SK-N-SH (cell line): ENCODE measurements at regions of chr2 and their contacts with region 1.

Region 1: GRCh38 chr2:234288974-234289455 is 207.9 kb downstream of the ARL4C start:
- DNase-seq: peak; percentile 67
- H3K4me3 ChIP-seq: no peak overlapping the region; a peak in 1 of 4 replicates
- H3K27ac ChIP-seq: no peak overlapping the region
- H3K4me1 ChIP-seq: peaks cover 13 to 21% of the 10 kb centered on the region in 2 experiments; a peak in 2 of 4 replicates
- H3K27me3 ChIP-seq: no peaks in the 10 kb centered on the region
- CTCF ChIP-seq: peak; percentile 65
- EP300 ChIP-seq: no peak
- RAD21 ChIP-seq: peak; percentile 85

Region 2: DNA sequence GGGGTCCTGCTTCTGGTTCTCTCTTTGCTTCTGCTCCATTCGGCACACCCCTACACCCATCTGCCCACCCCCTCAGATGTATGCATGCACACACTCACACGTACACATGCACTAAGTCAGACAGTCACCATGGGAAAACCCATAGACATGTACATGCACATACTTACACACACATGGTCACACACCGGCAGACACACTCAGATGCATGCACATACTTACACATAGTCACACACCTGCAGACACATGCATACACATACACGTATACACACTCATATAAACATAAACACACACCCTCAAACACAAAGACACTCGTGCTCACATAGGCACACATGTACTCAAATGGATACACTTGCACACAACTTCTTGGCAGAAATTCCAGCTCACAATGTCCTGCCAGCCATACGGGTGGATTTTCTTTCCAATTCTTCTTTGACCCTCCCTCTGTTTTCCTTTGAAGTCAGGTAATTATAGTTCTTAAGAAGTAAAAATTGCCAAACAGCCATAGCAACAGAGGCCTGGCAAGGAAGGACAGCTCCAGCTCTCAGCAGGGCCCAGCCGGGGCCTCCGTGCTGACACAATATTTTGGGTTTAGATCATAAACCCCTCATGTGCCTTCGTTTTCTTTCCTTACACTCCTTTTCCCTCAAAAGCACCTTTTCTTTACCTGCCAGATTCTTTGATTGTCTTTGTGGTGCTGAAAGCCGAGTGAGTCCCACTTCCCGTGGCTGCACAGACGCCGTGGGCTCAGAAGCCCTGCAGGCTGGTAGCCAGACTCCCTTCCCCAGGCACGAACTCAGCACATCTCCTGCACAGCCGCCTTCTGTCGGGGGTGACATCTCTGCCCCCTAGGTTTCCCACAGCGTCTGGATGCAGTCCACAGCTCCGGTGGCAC is 12.2 kb after region 1 on chr2:
- CTCF ChIA-PET with region 1: interaction called, 15 read pairs
- POLR2A ChIA-PET with region 1: interaction called, 3 read pairs
- DNase-seq: no peak
- H3K4me3 ChIP-seq: no peak overlapping the region
- H3K27ac ChIP-seq: no peak overlapping the region
- H3K4me1 ChIP-seq: peaks cover 0 to 2% of the 10 kb centered on the region in 2 experiments; a peak in 1 of 4 replicates
- H3K27me3 ChIP-seq: no peaks in the 10 kb centered on the region
- CTCF ChIP-seq: no peak
- EP300 ChIP-seq: no peak
- RAD21 ChIP-seq: no peak

Region 3: GRCh38 chr2:234406085-234406484 is 117.1 kb after region 1 on chr2:
- CTCF ChIA-PET with region 1: interaction called, 13 read pairs
- POLR2A ChIA-PET with region 1: no interaction called
- DNase-seq: no peak
- H3K4me3 ChIP-seq: no peak overlapping the region
- H3K27ac ChIP-seq: no peak overlapping the region
- H3K4me1 ChIP-seq: no peaks in the 10 kb centered on the region
- H3K27me3 ChIP-seq: no peaks in the 10 kb centered on the region
- CTCF ChIP-seq: no peak; the same call in 1 of the 2 replicates
- EP300 ChIP-seq: no peak
- RAD21 ChIP-seq: peak; percentile 73

Region 4: DNA sequence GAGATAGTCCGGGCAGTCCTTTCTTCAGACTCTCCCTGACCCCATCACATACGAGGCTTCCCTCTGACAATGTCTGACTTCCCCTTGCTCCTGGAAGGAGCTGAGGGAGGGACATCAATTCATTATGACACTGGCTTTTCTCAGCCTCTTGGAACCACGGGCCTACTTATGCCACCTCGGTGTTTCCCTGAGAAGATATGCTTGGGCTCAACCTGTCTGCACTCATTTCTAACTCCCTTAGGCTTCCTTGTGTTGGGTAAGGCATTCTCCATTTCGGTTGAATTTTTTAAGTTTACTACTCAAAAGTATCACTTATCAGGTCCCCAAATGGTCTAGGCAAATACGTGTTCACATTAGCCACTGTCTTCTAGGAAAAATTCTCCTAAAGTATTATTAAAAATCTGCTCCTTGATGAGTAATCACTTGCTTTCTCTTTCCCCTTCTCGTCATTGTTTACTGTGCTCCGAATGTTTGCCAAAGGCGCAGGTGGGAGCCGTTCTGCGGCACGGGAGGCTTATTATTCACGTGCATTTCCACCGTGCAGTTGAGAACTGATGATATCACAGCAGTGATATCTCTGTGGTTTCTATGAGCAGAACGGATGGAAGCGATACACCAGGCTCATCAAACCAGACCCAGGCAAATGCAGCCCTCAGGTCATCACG is 174.7 kb after region 1 on chr2:
- CTCF ChIA-PET with region 1: interaction called, 11 read pairs
- POLR2A ChIA-PET with region 1: no interaction called
- DNase-seq: peak; percentile 73
- H3K4me3 ChIP-seq: no peak overlapping the region
- H3K27ac ChIP-seq: peak overlapping the region in 1 of 2 experiments; percentile 62; a peak in 2 of 4 replicates
- H3K4me1 ChIP-seq: peaks cover 0 to 37% of the 10 kb centered on the region in 2 experiments; a peak in 2 of 4 replicates
- H3K27me3 ChIP-seq: no peaks in the 10 kb centered on the region
- CTCF ChIP-seq: no peak
- EP300 ChIP-seq: peak in 1 of 2 experiments; percentile 80; a peak in 1 of 4 replicates
- RAD21 ChIP-seq: 0 out of 2 replicates have a peak, but pooled peaks have one; percentile 11

Region 5: DNA sequence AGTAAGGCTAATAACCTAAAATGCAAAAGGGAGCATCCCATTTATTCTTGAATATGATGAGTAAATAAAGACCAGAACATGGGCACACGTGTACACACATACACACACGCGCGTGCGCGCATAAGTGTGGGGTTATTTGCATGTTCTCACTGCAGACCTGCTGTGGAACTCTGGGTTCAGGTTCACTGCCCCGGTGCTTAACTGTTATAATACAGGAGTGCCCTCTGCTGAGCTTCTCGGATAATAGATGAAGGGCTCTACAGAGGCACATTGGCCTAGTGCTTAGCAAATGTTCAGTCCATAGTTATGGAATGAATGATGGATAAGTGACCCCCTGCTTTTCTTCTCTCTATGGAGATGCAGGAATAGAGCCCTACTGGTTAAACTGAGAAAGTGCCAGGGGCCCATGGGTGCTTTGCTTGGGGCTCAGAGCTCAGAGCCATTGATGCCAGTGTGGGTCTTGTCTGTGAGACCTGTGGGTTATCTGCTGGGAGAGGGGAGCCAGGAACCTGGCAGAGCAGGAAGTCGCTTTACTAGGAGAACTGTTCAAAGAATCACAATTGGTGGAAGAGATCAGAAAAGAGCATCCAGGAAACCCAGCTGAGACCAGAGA is 211.5 kb after region 1 on chr2:
- CTCF ChIA-PET with region 1: interaction called, 27 read pairs
- POLR2A ChIA-PET with region 1: interaction called, 5 read pairs
- DNase-seq: peak; percentile 61
- H3K4me3 ChIP-seq: no peak overlapping the region
- H3K27ac ChIP-seq: no peak overlapping the region
- H3K4me1 ChIP-seq: peaks cover 6 to 8% of the 10 kb centered on the region in 2 experiments; a peak in 2 of 4 replicates
- H3K27me3 ChIP-seq: no peaks in the 10 kb centered on the region
- CTCF ChIP-seq: peak; percentile 64
- EP300 ChIP-seq: no peak
- RAD21 ChIP-seq: peak; percentile 93

Region 6: GRCh38 chr2:234571620-234572407 is 282.8 kb after region 1 on chr2:
- CTCF ChIA-PET with region 1: no interaction called
- POLR2A ChIA-PET with region 1: no interaction called
- DNase-seq: no peak
- H3K4me3 ChIP-seq: no peak overlapping the region
- H3K27ac ChIP-seq: no peak overlapping the region
- H3K4me1 ChIP-seq: no peaks in the 10 kb centered on the region; a peak in 1 of 4 replicates
- H3K27me3 ChIP-seq: no peaks in the 10 kb centered on the region
- CTCF ChIP-seq: no peak
- EP300 ChIP-seq: no peak
- RAD21 ChIP-seq: no peak